ENCODE measurements at regions of chr1 and their contacts with region 1.

Region 1: GRCh38 chr1:50774759-50775351 is 185.2 kb downstream of the FAF1 start:
- DNase-seq: peak; percentile 61
- ATAC-seq: no peak
- H3K4me3 ChIP-seq: no peak overlapping the region
- H3K4me3 Mint-ChIP-seq: no peak overlapping the region
- H3K27ac ChIP-seq: no peak overlapping the region
- H3K27ac Mint-ChIP-seq: no peak overlapping the region
- H3K4me1 ChIP-seq: peaks cover 3% of the 10 kb centered on the region in 2 donors
- H3K4me1 Mint-ChIP-seq: peaks cover 5% of the 10 kb centered on the region
- H3K27me3 ChIP-seq: no peaks in the 10 kb centered on the region
- H3K27me3 Mint-ChIP-seq: no peaks in the 10 kb centered on the region
- CTCF ChIP-seq: peak; percentile 91

Region 2: GRCh38 chr1:50873458-50874187 is 98.8 kb after region 1 on chr1:
- CTCF ChIA-PET with region 1: interaction called, 49 read pairs
- POLR2A ChIA-PET with region 1: no interaction called
- intact Hi-C with region 1: loop called (anchors 2 kb)
- DNase-seq: peak; percentile 86
- ATAC-seq: peak; percentile 88
- H3K4me3 ChIP-seq: peak overlapping the region in 2 of 5 experiments; percentile 30 to 41
- H3K4me3 Mint-ChIP-seq: peak overlapping the region; percentile 81
- H3K27ac ChIP-seq: no peak overlapping the region
- H3K27ac Mint-ChIP-seq: peak overlapping the region; percentile 68
- H3K4me1 ChIP-seq: peaks cover 0 to 3% of the 10 kb centered on the region in 2 donors
- H3K4me1 Mint-ChIP-seq: peaks cover 11% of the 10 kb centered on the region
- H3K27me3 ChIP-seq: no peaks in the 10 kb centered on the region
- H3K27me3 Mint-ChIP-seq: no peaks in the 10 kb centered on the region
- CTCF ChIP-seq: peak; percentile 91

Region 3: DNA sequence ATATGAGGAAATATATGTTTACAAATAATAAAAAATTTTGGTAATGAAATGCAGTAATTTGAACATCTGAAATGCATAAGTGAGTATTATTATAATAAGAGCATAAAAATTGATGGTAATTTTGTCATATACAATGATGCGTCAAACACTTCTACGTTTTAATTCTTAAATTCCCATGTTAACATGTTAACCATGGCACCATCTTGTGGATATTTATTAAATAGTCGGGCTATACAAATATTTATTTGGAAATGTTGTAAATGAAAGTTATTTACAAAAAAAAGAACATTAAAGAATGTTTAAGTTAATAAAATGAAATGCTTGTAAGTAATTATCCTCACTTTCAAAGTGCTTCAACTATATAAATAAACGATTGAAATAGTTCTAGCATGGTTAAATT is 270.0 kb after region 1 on chr1:
- CTCF ChIA-PET with region 1: interaction called, 10 read pairs
- POLR2A ChIA-PET with region 1: no interaction called
- intact Hi-C with region 1: loop called (anchors 1 kb)
- DNase-seq: peak; percentile 16
- ATAC-seq: no peak
- H3K4me3 ChIP-seq: no peak overlapping the region
- H3K4me3 Mint-ChIP-seq: no peak overlapping the region
- H3K27ac ChIP-seq: no peak overlapping the region
- H3K27ac Mint-ChIP-seq: no peak overlapping the region
- H3K4me1 ChIP-seq: no peaks in the 10 kb centered on the region
- H3K4me1 Mint-ChIP-seq: no peaks in the 10 kb centered on the region
- H3K27me3 ChIP-seq: no peaks in the 10 kb centered on the region
- H3K27me3 Mint-ChIP-seq: peaks cover 15% of the 10 kb centered on the region
- CTCF ChIP-seq: peak; percentile 49

Region 4: GRCh38 chr1:51058858-51059257 is 284.0 kb after region 1 on chr1:
- CTCF ChIA-PET with region 1: interaction called, 11 read pairs
- POLR2A ChIA-PET with region 1: no interaction called
- intact Hi-C with region 1: no loop called
- DNase-seq: peak; percentile 14
- ATAC-seq: no peak
- H3K4me3 ChIP-seq: no peak overlapping the region
- H3K4me3 Mint-ChIP-seq: no peak overlapping the region
- H3K27ac ChIP-seq: no peak overlapping the region
- H3K27ac Mint-ChIP-seq: no peak overlapping the region
- H3K4me1 ChIP-seq: no peaks in the 10 kb centered on the region
- H3K4me1 Mint-ChIP-seq: no peaks in the 10 kb centered on the region
- H3K27me3 ChIP-seq: peaks cover 0 to 3% (median 0%) of the 10 kb centered on the region in 4 experiments
- H3K27me3 Mint-ChIP-seq: peaks cover 27% of the 10 kb centered on the region
- CTCF ChIP-seq: peak; percentile 26

Region 5: DNA sequence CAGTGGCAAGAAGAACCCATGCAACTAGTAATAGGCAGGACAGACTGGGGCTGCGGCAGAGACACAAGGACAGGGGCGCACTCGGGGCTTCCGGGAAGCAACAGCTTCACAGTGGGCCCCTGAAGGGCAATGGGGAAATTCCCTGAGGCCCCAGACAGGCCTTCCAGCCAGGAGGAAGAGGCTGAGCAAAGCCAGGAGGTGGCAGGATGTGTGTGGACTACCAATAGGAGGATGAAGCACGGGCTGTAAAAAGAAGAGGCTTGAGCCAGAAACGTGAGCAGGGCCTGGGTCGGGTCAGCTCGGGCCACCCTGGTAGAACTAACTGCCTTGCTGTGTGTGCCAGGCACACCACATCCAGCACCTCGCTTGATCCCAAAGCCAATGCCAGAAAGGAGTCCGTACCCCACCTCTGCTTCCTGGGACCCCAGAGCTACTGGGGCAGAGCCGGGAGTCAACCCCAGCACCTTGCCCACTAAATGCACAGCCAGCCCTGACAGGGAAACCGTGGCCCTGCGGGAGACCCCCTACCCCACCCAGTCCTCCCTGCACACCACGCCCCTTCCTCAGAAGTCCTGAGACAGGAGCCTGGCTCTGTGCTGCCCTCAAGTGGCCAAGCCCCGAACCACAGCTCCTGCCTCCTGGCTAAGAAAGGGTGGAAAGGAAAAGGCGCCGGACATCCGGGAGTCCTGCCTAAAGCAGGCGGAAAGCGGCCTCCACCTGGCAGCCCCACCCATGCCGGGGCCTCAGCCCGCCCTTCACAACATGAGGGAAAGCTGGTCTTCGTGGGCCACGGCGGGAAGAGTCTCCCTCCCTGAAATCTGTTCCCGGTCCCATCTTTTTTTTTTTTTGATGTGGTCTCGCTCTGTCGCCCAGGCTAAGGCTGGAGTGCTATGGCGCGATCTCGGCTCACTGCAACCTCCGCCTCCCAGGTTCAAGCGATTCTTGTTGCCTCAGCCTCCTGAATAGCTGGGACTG is 521.8 kb after region 1 on chr1:
- CTCF ChIA-PET with region 1: interaction called, 13 read pairs
- POLR2A ChIA-PET with region 1: no interaction called
- intact Hi-C with region 1: no loop called
- DNase-seq: peak; percentile 70
- ATAC-seq: peak; percentile 76
- H3K4me3 ChIP-seq: peak overlapping the region in 4 of 5 experiments; percentile 27 to 60 (median 46)
- H3K4me3 Mint-ChIP-seq: peak overlapping the region; percentile 60
- H3K27ac ChIP-seq: no peak overlapping the region
- H3K27ac Mint-ChIP-seq: no peak overlapping the region
- H3K4me1 ChIP-seq: peaks cover 6 to 12% of the 10 kb centered on the region in 2 donors
- H3K4me1 Mint-ChIP-seq: peaks cover 10% of the 10 kb centered on the region
- H3K27me3 ChIP-seq: peaks cover 0 to 9% (median 0%) of the 10 kb centered on the region in 4 experiments
- H3K27me3 Mint-ChIP-seq: peaks cover 10% of the 10 kb centered on the region
- CTCF ChIP-seq: peak; percentile 96